ENCODE measurements at regions of chr7 and their contacts with region 1.

Region 1: GRCh38 chr7:138233189-138233588 is 156.9 kb downstream of the AKR1D1 start:
- DNase-seq: no peak
- H3K4me3 ChIP-seq: no peak overlapping the region
- H3K27ac ChIP-seq: no peak overlapping the region
- H3K4me1 ChIP-seq: no peaks in the 10 kb centered on the region
- H3K27me3 ChIP-seq: no peaks in the 10 kb centered on the region
- CTCF ChIP-seq: no peak
- EP300 ChIP-seq: no peak
- POLR2A ChIP-seq: no peak

Region 2: GRCh38 chr7:138049505-138050116 is 183.6 kb before region 1 on chr7:
- in situ Hi-C with region 1: no loop called
- intact Hi-C with region 1: no loop called
- DNase-seq: no peak
- H3K4me3 ChIP-seq: no peak overlapping the region
- H3K27ac ChIP-seq: no peak overlapping the region
- H3K4me1 ChIP-seq: no peaks in the 10 kb centered on the region
- H3K27me3 ChIP-seq: no peaks in the 10 kb centered on the region
- CTCF ChIP-seq: no peak
- EP300 ChIP-seq: no peak
- POLR2A ChIP-seq: no peak

Region 3: GRCh38 chr7:138247568-138248333 is 14.6 kb after region 1 on chr7:
- in situ Hi-C with region 1: no loop called
- intact Hi-C with region 1: loop called (anchors 1 kb)
- DNase-seq: no peak
- H3K4me3 ChIP-seq: no peak overlapping the region
- H3K27ac ChIP-seq: no peak overlapping the region
- H3K4me1 ChIP-seq: peaks cover 0 to 2% (median 0%) of the 10 kb centered on the region in 4 donors
- H3K27me3 ChIP-seq: no peaks in the 10 kb centered on the region
- CTCF ChIP-seq: no peak
- EP300 ChIP-seq: no peak
- POLR2A ChIP-seq: no peak

Region 4: GRCh38 chr7:138608275-138608674 is 375.1 kb after region 1 on chr7:
- in situ Hi-C with region 1: no loop called
- intact Hi-C with region 1: no loop called
- DNase-seq: no peak
- H3K4me3 ChIP-seq: no peak overlapping the region
- H3K27ac ChIP-seq: no peak overlapping the region
- H3K4me1 ChIP-seq: peaks cover 0 to 3% (median 0%) of the 10 kb centered on the region in 4 donors
- H3K27me3 ChIP-seq: no peaks in the 10 kb centered on the region
- CTCF ChIP-seq: no peak
- EP300 ChIP-seq: no peak
- POLR2A ChIP-seq: no peak